ENCODE measurements at regions of chr3 and their contacts with region 1.

Region 1: GRCh38 chr3:43503067-43503728 is 118.6 kb downstream of the ANO10 start:
- DNase-seq: no peak
- ATAC-seq: peak in 1 of 2 donors; percentile 77
- H3K4me3 ChIP-seq: no peak overlapping the region
- H3K27ac ChIP-seq: no peak overlapping the region
- H3K4me1 ChIP-seq: no peaks in the 10 kb centered on the region
- H3K27me3 ChIP-seq: no peaks in the 10 kb centered on the region
- CTCF ChIP-seq: peak; percentile 26 to 71 (median 48)
- POLR2A ChIP-seq: no peak

Region 2: DNA sequence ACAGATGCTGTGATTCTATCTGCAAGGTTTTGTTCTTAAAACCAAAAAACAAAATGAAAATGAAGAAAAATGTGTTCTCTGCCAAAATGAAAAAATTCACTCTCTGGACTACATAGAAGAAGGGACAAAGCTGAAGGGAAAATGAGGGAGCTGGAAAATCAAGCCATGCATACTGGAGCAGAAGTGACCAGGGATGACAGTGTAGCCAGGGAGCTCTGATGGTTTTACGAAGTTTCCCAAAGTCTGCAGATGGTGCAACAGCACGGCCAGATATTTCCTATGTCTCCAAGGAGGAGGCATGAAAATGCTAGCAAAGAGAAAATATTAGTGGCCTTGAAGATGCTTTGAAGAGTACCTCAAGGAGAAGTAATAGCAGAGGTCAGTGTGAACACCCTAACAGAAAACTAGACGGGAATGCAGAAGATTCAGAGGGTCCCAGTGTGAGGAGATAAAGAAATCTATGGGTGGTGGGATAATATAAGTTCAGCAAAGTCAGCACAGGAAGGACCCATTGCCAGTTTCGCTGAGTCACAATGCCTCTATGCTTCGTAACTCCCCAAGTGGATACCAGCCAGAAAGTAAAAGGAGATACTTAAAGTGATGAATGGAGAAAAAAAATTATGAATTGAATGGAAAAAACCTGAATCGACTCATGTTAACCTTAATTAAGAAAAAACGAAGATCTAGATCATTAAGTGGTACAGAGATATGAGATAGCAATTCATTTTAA is 358.3 kb before region 1 on chr3:
- in situ Hi-C with region 1: no loop called
- intact Hi-C with region 1: no loop called
- DNase-seq: no peak
- ATAC-seq: peak in 1 of 2 donors; percentile 30
- H3K4me3 ChIP-seq: no peak overlapping the region
- H3K27ac ChIP-seq: no peak overlapping the region
- H3K4me1 ChIP-seq: no peaks in the 10 kb centered on the region
- H3K27me3 ChIP-seq: no peaks in the 10 kb centered on the region
- CTCF ChIP-seq: no peak
- POLR2A ChIP-seq: no peak

Region 3: GRCh38 chr3:43162230-43163084 is 340.7 kb before region 1 on chr3:
- in situ Hi-C with region 1: loop called in 2 of 4 experiments (anchors 10 kb)
- intact Hi-C with region 1: loop called (anchors 1 kb)
- DNase-seq: no peak
- ATAC-seq: no peak
- H3K4me3 ChIP-seq: no peak overlapping the region
- H3K27ac ChIP-seq: peak overlapping the region in 3 of 4 donors; percentile 6 to 43 (median 36)
- H3K4me1 ChIP-seq: peaks cover 0 to 7% of the 10 kb centered on the region in 2 donors
- H3K27me3 ChIP-seq: no peaks in the 10 kb centered on the region
- CTCF ChIP-seq: peak in 3 of 5 experiments; percentile 20 to 43 (median 35)
- POLR2A ChIP-seq: no peak

Region 4: GRCh38 chr3:43223670-43224364 is 279.4 kb before region 1 on chr3:
- in situ Hi-C with region 1: no loop called
- intact Hi-C with region 1: loop called (anchors 5 kb)
- DNase-seq: no peak
- ATAC-seq: no peak
- H3K4me3 ChIP-seq: no peak overlapping the region
- H3K27ac ChIP-seq: no peak overlapping the region
- H3K4me1 ChIP-seq: no peaks in the 10 kb centered on the region
- H3K27me3 ChIP-seq: no peaks in the 10 kb centered on the region
- CTCF ChIP-seq: peak in 2 of 5 experiments; percentile 31 to 43
- POLR2A ChIP-seq: no peak

Region 5: GRCh38 chr3:43363621-43364266 is 139.5 kb before region 1 on chr3:
- in situ Hi-C with region 1: no loop called
- intact Hi-C with region 1: loop called (anchors 10 kb)
- DNase-seq: peak; percentile 52 to 63
- ATAC-seq: peak; percentile 35 to 43
- H3K4me3 ChIP-seq: peak overlapping the region in 3 of 4 donors; percentile 17 to 25 (median 21)
- H3K27ac ChIP-seq: peak overlapping the region; percentile 47 to 77 (median 56)
- H3K4me1 ChIP-seq: peaks cover 21 to 25% of the 10 kb centered on the region in 2 donors
- H3K27me3 ChIP-seq: no peaks in the 10 kb centered on the region
- CTCF ChIP-seq: no peak
- POLR2A ChIP-seq: no peak

Region 6: GRCh38 chr3:43852066-43852465 is 348.9 kb after region 1 on chr3:
- in situ Hi-C with region 1: no loop called
- intact Hi-C with region 1: no loop called
- DNase-seq: no peak
- ATAC-seq: no peak
- H3K4me3 ChIP-seq: no peak overlapping the region
- H3K27ac ChIP-seq: no peak overlapping the region
- H3K4me1 ChIP-seq: no peaks in the 10 kb centered on the region
- H3K27me3 ChIP-seq: peaks cover 0 to 6% (median 0%) of the 10 kb centered on the region in 3 donors
- CTCF ChIP-seq: no peak
- POLR2A ChIP-seq: no peak

Measured in gastrocnemius medialis (tissue), 4 donors.